Activated T-helper 2 cell treated with anti-CD3 and anti-CD28 coated beads, Interferon-gamma antibody, Interleukin-2, Interleukin-4, amounts not matched to agents 10 μg/mL and 5 μg/mL and 100 μg/mL, durations not matched to agents 14 hours and 24 hours and 36 hours (primary cell): ENCODE measurements at regions of chr6 and their contacts with region 1.

Region 1: DNA sequence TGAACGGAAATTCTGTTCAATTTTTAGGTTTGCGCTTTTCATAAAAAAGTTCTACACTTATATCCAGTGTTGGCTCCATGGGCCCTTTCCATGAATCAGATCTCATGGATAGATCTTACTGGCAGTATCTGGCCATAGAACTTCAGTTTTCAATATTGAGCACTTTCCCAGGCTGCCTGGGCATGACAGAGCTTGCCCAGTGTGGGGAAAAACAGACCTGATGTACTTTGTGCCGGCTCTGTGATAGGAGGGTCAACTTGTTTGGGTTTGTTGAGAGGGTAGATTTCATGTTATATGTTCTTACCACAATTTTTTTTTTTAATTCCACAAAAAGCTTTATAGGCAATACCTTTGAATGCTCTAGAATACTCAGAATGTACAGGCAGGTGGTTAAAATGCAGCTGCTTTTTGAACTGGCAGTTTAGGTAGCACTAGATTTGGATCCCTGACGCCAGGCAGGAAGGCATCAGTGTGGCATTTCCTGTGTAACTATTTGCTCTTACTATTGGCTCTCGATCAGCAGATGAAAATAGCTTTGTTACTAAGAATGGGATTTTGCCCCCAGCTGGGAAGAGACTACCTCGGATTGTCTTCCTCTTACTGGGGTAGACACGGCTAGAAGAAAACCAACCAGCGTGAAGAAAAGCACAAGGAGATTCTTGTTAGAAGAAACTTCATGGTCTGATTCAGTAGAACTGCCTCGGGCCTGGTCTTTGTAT is 404.9 kb upstream of the SOX4 start:
- DNase-seq: no peak
- H3K4me3 Mint-ChIP-seq: no peak overlapping the region
- H3K27ac Mint-ChIP-seq: no peak overlapping the region
- H3K4me1 Mint-ChIP-seq: peaks cover 24% of the 10 kb centered on the region
- H3K27me3 Mint-ChIP-seq: no peaks in the 10 kb centered on the region

Region 2: DNA sequence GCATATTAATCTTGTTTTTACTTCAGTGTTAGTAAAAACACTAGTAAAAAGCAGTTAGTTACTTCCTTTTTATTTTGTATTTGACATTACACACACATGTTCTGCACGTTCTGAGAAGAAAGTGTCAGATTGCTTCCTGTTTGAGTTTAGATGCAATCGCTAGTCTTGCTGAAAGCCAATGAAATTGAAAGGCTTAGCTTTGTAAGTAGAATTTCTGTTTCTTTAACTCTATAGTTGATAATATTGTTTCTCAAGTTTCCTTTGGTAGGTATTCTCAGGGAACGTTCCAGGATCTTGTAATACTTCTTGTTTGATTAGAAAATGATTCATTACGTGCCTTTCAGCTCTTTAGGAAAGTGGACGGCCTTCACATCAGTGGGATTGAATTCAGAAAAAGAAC is 599.4 kb before region 1 on chr6:
- intact Hi-C with region 1: loop called (anchors 10 kb)
- DNase-seq: no peak
- H3K4me3 Mint-ChIP-seq: no peak overlapping the region
- H3K27ac Mint-ChIP-seq: no peak overlapping the region
- H3K4me1 Mint-ChIP-seq: peaks cover 26% of the 10 kb centered on the region
- H3K27me3 Mint-ChIP-seq: no peaks in the 10 kb centered on the region

Region 3: GRCh38 chr6:20716865-20717264 is 471.8 kb before region 1 on chr6:
- intact Hi-C with region 1: loop called (anchors 10 kb)
- DNase-seq: no peak
- H3K4me3 Mint-ChIP-seq: no peak overlapping the region
- H3K27ac Mint-ChIP-seq: no peak overlapping the region
- H3K4me1 Mint-ChIP-seq: peaks cover 26% of the 10 kb centered on the region
- H3K27me3 Mint-ChIP-seq: no peaks in the 10 kb centered on the region

Region 4: GRCh38 chr6:20877008-20877937 is 311.4 kb before region 1 on chr6:
- intact Hi-C with region 1: loop called (anchors 10 kb)
- DNase-seq: no peak
- H3K4me3 Mint-ChIP-seq: no peak overlapping the region
- H3K27ac Mint-ChIP-seq: peak overlapping the region; percentile 72
- H3K4me1 Mint-ChIP-seq: peaks cover 16% of the 10 kb centered on the region
- H3K27me3 Mint-ChIP-seq: no peaks in the 10 kb centered on the region

Region 5: DNA sequence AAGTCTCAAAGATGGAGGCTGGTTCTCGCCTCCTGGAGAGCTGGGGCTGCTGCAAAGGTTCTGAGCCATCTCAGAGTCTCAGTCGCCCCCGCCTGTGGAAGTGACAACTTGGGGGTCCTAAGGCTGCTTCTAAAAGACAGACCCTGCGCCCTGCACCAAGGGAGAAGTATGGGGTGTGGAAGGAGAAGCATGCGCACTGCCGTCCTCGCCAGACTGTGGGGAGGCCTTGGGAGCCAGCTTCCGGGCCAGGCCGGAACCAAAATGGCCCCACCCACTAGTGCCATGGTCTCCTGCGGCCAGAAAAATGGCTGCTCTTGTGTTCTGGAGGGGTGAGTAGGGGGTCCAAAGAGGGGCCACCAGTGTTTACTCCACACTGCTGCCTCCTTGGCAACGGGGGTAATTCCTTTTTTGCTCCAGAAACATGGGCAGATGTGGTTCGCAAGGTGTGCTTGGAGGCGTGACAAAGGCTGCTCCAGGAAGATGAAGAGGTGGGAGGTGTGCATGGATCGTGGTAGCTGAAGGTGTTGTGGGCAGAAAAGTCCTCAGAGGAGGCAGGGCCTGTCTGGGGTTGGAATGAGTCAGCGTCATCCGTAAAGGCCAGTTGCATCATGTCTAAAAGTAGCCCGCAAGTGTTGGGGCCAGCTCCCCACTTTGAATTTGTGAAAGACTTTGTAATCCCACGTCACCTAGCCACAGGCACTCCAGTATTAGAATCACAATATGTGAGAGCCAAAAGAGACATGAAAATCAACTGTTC is 75.0 kb after region 1 on chr6:
- intact Hi-C with region 1: loop called (anchors 1 kb)
- DNase-seq: no peak
- H3K4me3 Mint-ChIP-seq: no peak overlapping the region
- H3K27ac Mint-ChIP-seq: no peak overlapping the region
- H3K4me1 Mint-ChIP-seq: peaks cover 26% of the 10 kb centered on the region
- H3K27me3 Mint-ChIP-seq: no peaks in the 10 kb centered on the region